AG04450 (cell line): ENCODE measurements at regions of chr2 and their contacts with region 1.

Region 1: GRCh38 chr2:3728104-3729054 is 25.0 kb downstream of the DCDC2C start:
- DNase-seq: peak; percentile 26
- H3K4me3 ChIP-seq: peak overlapping the region; percentile 36
- H3K27ac ChIP-seq: no peak overlapping the region
- H3K27me3 ChIP-seq: peaks cover 2% of the 10 kb centered on the region
- CTCF ChIP-seq: peak; percentile 61

Region 2: GRCh38 chr2:3712831-3713503 is 15.4 kb before region 1 on chr2:
- CTCF ChIA-PET with region 1: interaction called, 20 read pairs
- POLR2A ChIA-PET with region 1: no interaction called
- DNase-seq: peak; percentile 29
- H3K4me3 ChIP-seq: no peak overlapping the region
- H3K27ac ChIP-seq: no peak overlapping the region
- H3K27me3 ChIP-seq: no peaks in the 10 kb centered on the region
- CTCF ChIP-seq: no peak

Region 3: DNA sequence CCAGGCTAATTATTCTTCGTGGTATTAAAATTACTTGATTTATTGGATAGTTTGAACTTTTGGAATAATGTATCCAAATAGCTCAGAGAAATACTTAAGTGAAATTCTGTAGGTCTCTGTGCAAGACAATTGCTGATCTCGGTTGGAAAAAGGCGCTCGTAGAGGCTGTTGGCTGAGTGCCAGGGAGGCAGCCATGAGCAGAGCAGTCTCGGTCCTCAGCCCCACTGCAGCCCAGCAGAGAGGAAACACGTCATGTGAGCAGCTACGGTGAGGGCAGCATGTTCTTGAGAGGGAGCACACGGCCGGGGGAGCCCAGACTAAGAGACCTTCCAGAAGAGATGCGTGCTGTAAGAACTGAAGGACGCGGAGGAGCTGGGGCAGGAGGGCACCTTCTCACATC is 17.5 kb after region 1 on chr2:
- CTCF ChIA-PET with region 1: interaction called, 25 read pairs
- POLR2A ChIA-PET with region 1: no interaction called
- DNase-seq: no peak
- H3K4me3 ChIP-seq: no peak overlapping the region
- H3K27ac ChIP-seq: no peak overlapping the region
- H3K27me3 ChIP-seq: peaks cover 5% of the 10 kb centered on the region
- CTCF ChIP-seq: no peak

Region 4: GRCh38 chr2:3780477-3781402 is 52.4 kb after region 1 on chr2:
- CTCF ChIA-PET with region 1: interaction called, 56 read pairs
- POLR2A ChIA-PET with region 1: no interaction called
- DNase-seq: no peak
- H3K4me3 ChIP-seq: no peak overlapping the region
- H3K27ac ChIP-seq: no peak overlapping the region
- H3K27me3 ChIP-seq: no peaks in the 10 kb centered on the region
- CTCF ChIP-seq: peak; percentile 75

Region 5: GRCh38 chr2:3827673-3828575 is 99.5 kb after region 1 on chr2:
- CTCF ChIA-PET with region 1: interaction called, 142 read pairs
- POLR2A ChIA-PET with region 1: no interaction called
- DNase-seq: peak; percentile 4
- H3K4me3 ChIP-seq: no peak overlapping the region
- H3K27ac ChIP-seq: no peak overlapping the region
- H3K27me3 ChIP-seq: no peaks in the 10 kb centered on the region
- CTCF ChIP-seq: peak; percentile 78